Activated T-helper 1 cell treated with anti-CD3 and anti-CD28 coated beads, Interleukin-12 subunit alpha, Interleukin-12 subunit beta, Interleukin-2, Interleukin-4 antibody, amounts not matched to agents 30 ng/mL and 10 ng/mL and 1 ng/mL, durations not matched to agents 14 hours and 24 hours and 36 hours (primary cell): ENCODE measurements at regions of chr9 and their contacts with region 1.

Region 1: DNA sequence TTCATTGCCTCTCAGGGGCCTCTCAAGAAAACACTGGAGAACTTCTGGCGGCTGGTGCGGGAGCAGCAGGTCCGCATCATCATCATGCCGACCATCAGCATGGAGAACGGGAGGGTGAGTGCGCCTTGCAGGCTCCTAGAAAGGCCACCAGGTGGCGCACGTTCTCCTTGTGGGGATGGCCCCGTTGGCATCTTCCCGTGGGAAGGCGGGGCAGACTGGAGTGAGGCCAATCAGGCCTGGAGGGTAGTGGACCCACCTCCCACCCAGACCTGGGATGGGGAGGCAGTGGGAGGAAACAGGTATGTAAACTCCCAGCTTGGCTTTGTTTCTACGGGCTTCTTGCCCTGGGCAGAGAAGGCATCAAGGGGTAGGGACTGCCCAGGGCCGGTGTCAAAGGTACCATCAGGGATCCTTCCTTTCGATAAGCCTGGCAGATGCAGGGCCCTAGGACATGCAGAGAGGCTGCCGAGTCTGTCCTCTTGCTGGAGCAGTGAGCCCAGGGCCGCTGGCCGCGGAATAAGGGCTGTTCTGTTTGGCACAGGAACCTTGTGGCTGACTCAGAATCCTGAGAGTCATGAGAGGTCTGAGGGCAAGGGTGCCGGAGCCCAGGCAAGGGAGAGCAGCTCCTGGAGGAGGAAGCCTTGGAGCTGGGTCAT is 18.9 kb upstream of the SPTLC1 start:
- DNase-seq: peak; percentile 65
- H3K4me3 Mint-ChIP-seq: no peak overlapping the region
- H3K27ac Mint-ChIP-seq: no peak overlapping the region
- H3K4me1 Mint-ChIP-seq: peaks cover 8% of the 10 kb centered on the region
- H3K27me3 Mint-ChIP-seq: peaks cover 30% of the 10 kb centered on the region

Region 2: DNA sequence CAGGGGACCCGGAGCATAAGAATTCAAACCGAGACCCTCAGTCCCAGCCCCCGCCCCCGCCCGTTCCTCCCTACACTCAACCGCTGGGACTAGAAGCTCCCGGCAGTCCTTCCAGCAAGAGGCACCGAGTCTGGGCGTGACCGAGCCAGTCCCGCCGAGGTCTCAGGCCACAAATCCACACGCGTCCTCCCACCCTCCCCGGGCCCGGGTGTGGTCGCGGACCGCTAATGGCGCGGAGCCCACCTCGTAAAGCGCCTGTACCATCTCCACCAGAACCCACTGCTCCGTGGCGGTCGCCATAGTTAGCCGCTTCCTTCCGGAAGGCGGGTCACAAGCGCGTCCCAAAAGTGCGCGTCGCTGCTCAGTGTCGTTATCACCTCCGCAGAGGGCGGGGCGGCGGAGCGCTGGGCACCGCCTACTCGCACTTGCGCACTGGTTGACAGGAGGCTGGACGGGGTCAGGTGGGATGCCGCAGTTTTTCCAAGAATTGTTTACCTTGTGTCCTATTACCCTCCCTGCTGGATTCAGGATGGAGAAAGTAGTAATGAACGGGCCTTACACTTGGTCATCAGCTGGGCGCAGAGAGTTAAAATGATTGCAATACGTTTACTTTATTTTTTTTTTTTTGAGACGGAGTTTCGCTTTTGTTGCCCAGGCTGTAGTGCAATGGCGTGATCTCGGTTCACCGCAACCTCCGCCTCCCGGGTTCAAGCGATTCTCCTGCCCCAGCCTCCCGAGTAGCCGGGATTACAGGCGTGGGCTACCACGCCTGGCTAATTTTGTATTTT is 18.8 kb before region 1 on chr9 and contains the start of gene SPTLC1:
- intact Hi-C with region 1: loop called (anchors 1 kb)
- DNase-seq: peak; percentile 93
- H3K4me3 Mint-ChIP-seq: peak within 1 kb of the TSS; percentile 97
- H3K27ac Mint-ChIP-seq: peak within 1 kb of the TSS; percentile 95
- H3K4me1 Mint-ChIP-seq: peaks cover 47% of the 10 kb centered on the region
- H3K27me3 Mint-ChIP-seq: no peaks in the 10 kb centered on the region
- total RNA-seq, gene SPTLC1: 60.2 and 62.3 TPM in 2 replicates

Region 3: DNA sequence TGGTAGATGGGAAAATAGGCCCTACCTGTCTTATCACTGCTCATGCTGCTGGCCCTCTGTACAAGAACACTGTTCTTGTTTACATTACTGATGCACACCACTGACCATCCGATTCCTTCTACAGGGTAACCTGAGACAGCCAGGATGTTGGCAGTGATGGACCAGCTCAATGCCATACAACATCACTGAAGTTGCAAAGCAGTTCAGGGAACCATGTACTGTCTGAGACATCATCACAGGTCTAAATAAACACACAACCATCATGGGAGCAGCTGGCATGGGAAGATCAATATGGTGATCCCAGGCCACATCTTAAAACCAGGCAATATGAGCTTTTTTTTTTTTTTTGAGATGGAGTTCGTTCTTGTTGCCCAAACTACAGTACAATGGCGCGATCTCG is 100.4 kb after region 1 on chr9:
- intact Hi-C with region 1: loop called (anchors 10 kb)
- DNase-seq: no peak
- H3K4me3 Mint-ChIP-seq: no peak overlapping the region
- H3K27ac Mint-ChIP-seq: no peak overlapping the region
- H3K4me1 Mint-ChIP-seq: no peaks in the 10 kb centered on the region
- H3K27me3 Mint-ChIP-seq: no peaks in the 10 kb centered on the region

Region 4: DNA sequence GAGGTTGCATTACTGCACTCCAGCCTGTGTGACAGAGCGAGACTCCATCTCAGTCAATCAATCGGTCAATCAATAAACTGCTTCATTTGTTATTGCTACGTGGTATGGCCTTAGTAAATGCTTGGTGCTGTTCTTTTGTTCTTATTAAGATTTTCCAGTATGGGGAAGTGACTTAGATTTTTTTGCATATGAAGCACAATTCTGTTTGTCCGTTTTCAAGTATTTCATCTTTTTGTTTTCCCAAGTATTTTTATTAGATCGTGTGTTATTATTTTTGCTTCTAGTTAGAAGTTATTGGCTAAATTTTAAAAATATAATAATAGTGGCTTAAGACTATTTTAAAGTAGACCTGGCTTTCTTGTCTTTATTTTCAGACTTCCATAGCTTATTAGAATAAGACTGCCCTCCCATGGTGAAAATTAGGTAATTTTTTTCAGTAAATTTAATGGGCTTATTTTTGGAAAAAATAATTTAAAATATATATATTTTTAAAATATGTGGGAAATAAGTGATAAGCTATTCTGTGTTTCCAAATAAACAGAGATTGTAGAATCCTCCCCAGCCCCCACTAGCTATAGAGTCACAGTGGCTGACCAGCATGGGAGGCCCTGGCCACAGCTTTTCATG is 304.9 kb after region 1 on chr9:
- intact Hi-C with region 1: loop called (anchors 10 kb)
- DNase-seq: no peak
- H3K4me3 Mint-ChIP-seq: no peak overlapping the region
- H3K27ac Mint-ChIP-seq: no peak overlapping the region
- H3K4me1 Mint-ChIP-seq: peaks cover 5% of the 10 kb centered on the region
- H3K27me3 Mint-ChIP-seq: peaks cover 4% of the 10 kb centered on the region

Region 5: GRCh38 chr9:92634712-92635605 is 500.9 kb after region 1 on chr9:
- intact Hi-C with region 1: loop called (anchors 1 kb)
- DNase-seq: peak; percentile 43
- H3K4me3 Mint-ChIP-seq: no peak overlapping the region
- H3K27ac Mint-ChIP-seq: peak overlapping the region; percentile 71
- H3K4me1 Mint-ChIP-seq: peaks cover 24% of the 10 kb centered on the region
- H3K27me3 Mint-ChIP-seq: no peaks in the 10 kb centered on the region

Region 6: DNA sequence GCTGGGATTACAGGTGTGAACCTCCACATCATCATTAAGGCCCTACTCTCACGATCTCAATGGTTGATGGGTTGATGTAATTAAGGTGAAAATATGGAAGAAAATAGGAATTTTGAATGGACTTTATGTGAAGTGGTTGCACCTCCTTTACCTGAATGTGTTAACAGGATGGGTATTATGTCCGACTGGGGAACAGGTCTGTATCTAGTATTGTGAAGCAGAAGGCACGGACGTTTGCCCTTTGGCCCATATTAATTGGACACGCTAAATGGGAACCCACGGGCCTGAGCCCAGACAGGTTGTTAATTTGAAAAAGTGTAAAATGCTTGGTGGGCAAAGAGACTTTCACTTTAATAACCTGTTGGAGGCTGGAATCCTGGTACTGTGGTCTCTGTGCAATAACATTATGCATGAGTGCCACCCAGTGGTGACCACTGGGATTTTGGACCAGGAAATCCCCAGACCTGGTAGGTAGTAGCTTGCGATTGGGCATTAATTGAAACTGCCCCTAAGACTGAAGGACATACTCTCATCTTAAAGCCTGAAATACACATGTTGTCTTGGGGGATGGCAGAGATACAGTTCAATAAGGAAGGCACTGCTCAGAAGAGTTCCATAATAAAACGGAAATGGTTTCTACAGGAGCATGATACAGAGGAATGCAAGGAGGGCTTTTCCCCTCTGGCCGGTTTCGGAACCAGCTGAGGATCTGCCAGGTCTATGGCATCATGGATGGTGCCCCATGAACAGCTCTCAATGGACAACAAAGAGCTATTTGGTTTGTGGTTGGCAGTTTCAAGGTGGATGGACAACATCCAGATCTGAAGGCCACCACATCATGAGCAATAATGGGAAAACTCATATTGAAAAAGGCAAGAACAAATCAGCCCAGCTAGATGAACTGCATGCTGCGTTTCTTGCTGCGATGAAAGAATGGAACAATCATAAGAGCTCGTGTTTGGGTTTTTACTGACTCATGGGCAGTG is 656.8 kb after region 1 on chr9:
- intact Hi-C with region 1: loop called (anchors 1 kb)
- DNase-seq: peak; percentile 56
- H3K4me3 Mint-ChIP-seq: no peak overlapping the region
- H3K27ac Mint-ChIP-seq: no peak overlapping the region
- H3K4me1 Mint-ChIP-seq: peaks cover 12% of the 10 kb centered on the region
- H3K27me3 Mint-ChIP-seq: peaks cover 13% of the 10 kb centered on the region

Region 7: DNA sequence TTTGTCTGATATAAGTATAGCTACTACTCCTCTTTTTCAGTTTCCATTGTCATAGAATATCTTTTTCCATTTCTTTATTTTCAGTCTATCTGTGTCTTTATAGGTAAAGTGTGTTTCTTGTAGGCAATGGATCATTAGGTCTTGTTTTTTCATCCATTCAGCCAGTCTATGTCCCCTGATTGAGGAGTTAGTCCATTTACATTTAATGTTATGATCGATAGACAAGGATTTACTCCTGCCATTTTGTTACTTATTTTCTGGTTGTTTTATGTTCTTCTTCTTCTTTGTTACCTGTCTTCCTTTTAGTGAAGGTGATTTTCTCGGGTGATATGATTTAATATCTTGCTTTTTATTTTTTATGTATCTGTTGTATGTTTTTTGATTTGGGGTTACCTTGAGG is 1652.1 kb after region 1 on chr9:
- intact Hi-C with region 1: no loop called
- DNase-seq: no peak
- H3K4me3 Mint-ChIP-seq: no peak overlapping the region
- H3K27ac Mint-ChIP-seq: no peak overlapping the region
- H3K4me1 Mint-ChIP-seq: no peaks in the 10 kb centered on the region
- H3K27me3 Mint-ChIP-seq: peaks cover 18% of the 10 kb centered on the region